BJ (cell line): ENCODE measurements at regions of chr3 and their contacts with region 1.

Region 1: DNA sequence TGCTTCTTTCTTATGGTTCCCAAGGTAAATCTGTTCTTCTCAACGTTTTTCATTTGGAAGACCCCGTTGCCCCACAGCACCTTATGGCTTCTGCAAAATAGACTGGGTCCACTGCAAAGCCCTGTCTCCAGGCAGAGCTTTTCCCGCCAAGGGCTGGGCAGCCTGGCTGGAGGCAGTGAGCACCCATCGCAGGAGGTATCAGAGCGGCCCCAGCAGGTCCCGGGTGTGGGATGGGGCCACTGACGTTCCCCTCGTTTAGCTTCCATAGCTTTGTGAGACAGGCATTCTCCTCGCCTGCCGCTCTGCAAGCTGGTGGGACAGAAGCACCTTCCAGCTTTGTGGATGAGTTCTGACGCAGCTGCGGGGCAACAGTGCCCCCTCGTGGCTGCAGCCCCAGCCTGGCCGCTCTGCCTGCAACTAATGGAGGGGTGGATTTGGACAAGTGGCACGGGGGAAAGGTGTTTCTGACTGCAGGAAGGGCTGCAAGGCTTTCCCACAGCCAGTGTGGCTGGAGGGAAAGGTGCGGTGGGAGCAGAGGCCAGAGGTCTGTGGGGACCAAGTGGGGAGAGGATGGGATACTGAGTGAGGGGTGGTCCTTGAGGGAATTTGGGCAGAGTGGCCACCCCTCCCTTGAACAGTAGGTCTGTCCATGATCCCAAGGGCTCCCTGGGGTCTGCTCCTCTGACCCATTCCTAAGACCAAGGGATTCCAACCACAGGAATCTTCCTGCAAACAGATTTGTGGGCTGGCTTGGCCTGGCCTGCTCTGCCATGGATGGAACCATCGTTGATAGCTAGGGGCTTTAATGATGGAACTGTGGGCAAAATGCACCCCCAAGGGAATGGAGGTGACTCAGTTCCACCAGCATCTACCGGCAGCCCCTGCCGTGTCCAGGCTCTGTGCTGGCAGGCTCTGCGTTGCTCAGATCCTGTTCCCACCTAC is 99.4 kb downstream of the FBLN2 start:
- DNase-seq: no peak
- H3K4me3 ChIP-seq: no peak overlapping the region
- H3K27me3 ChIP-seq: no peaks in the 10 kb centered on the region
- CTCF ChIP-seq: peak; percentile 99

Region 2: GRCh38 chr3:13277860-13278531 is 370.3 kb before region 1 on chr3:
- CTCF ChIA-PET with region 1: no interaction called
- POLR2A ChIA-PET with region 1: no interaction called
- DNase-seq: no peak
- H3K4me3 ChIP-seq: no peak overlapping the region
- H3K27me3 ChIP-seq: peaks cover 19% of the 10 kb centered on the region
- CTCF ChIP-seq: no peak

Region 3: DNA sequence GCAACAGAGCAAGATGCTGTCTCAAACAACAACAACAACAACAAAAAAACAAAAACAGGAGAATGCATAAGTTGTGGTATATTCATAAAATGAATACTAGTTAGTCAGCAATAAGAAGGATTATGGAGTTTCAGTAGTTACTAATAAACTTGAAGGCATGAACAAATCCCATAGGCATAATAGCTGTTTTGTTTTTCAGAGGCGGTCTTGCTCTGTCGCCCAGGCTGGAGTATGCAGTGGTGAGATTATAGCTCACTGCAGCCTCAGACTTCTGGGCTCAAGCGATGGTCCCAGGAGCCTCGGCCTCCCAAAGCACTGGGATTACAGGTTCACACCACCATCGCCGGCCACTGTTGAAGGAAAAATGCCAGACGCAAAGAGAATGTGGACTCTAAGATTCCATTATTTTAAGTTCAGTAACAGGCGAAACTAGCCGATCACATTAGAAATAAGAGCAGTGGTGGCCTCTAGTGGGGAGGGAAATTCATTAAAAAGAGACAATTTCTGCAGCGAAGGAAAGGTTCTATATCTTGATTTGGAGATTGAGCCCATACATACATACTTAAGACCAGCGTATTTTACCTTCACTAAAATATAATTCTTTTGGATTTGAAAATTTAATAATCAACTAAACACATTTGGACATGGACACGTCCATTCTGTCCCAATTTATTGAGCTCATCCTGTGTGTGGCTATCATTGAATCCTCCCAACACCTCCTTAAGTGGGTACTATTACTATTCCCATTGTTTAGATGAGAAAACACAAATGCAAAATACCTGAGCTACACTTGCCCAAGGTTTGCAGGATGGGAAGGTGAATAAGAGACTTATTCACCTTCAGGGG is 195.6 kb before region 1 on chr3:
- CTCF ChIA-PET with region 1: interaction called, 11 read pairs
- POLR2A ChIA-PET with region 1: no interaction called
- DNase-seq: no peak
- H3K4me3 ChIP-seq: no peak overlapping the region
- H3K27me3 ChIP-seq: peaks cover 2% of the 10 kb centered on the region
- CTCF ChIP-seq: peak; percentile 68

Region 4: GRCh38 chr3:13507769-13508339 is 140.5 kb before region 1 on chr3:
- CTCF ChIA-PET with region 1: interaction called, 655 read pairs
- POLR2A ChIA-PET with region 1: no interaction called
- DNase-seq: no peak
- H3K4me3 ChIP-seq: no peak overlapping the region
- H3K27me3 ChIP-seq: no peaks in the 10 kb centered on the region
- CTCF ChIP-seq: no peak

Region 5: GRCh38 chr3:13548696-13549622 is 99.4 kb before region 1 on chr3 and contains the start of gene FBLN2:
- CTCF ChIA-PET with region 1: interaction called, 10 read pairs
- POLR2A ChIA-PET with region 1: no interaction called
- DNase-seq: no peak
- H3K4me3 ChIP-seq: peak within 1 kb of the TSS; percentile 61
- H3K27me3 ChIP-seq: no peaks in the 10 kb centered on the region
- CTCF ChIP-seq: no peak
- polyA plus RNA-seq, gene FBLN2: 131 and 248 TPM in 2 replicates

Region 6: DNA sequence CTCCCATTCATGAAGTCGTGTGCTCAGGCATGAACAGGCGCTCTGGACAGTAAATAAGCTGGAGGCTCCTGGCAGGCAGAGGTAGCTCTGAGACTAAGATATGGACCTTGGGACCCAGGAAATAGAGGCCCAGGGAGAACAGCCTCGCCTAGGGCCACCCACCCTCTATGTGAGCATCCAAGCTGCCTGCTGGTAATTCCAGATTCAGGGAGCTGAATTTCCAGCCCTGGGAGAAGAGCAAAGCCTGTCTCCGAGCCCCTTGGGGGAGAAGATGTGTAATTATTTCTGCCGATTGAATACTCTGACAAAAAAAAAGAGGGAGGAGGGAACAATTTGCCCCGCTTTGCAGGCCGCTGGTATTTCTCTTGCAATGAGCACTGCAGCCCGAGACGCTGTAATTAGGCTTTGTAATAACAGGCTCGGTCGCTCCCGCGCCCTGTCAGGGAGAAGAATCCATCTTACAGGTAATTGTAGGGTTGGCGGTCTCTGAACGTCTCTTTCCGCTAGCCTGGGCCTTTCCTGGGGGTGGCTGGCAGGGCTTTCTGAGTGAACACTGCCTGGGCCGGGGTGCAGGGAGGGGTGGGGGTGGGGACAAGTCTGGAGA is 100.0 kb after region 1 on chr3:
- CTCF ChIA-PET with region 1: no interaction called
- POLR2A ChIA-PET with region 1: no interaction called
- DNase-seq: no peak
- H3K4me3 ChIP-seq: no peak overlapping the region
- H3K27me3 ChIP-seq: no peaks in the 10 kb centered on the region
- CTCF ChIP-seq: no peak

Region 7: GRCh38 chr3:14472471-14473351 is 824.4 kb after region 1 on chr3:
- CTCF ChIA-PET with region 1: no interaction called
- POLR2A ChIA-PET with region 1: no interaction called
- DNase-seq: peak; percentile 57
- H3K4me3 ChIP-seq: no peak overlapping the region
- H3K27me3 ChIP-seq: no peaks in the 10 kb centered on the region
- CTCF ChIP-seq: no peak